Dorsolateral prefrontal cortex (tissue), 120 donors: ENCODE measurements at regions of chr4 and their contacts with region 1.

Region 1: DNA sequence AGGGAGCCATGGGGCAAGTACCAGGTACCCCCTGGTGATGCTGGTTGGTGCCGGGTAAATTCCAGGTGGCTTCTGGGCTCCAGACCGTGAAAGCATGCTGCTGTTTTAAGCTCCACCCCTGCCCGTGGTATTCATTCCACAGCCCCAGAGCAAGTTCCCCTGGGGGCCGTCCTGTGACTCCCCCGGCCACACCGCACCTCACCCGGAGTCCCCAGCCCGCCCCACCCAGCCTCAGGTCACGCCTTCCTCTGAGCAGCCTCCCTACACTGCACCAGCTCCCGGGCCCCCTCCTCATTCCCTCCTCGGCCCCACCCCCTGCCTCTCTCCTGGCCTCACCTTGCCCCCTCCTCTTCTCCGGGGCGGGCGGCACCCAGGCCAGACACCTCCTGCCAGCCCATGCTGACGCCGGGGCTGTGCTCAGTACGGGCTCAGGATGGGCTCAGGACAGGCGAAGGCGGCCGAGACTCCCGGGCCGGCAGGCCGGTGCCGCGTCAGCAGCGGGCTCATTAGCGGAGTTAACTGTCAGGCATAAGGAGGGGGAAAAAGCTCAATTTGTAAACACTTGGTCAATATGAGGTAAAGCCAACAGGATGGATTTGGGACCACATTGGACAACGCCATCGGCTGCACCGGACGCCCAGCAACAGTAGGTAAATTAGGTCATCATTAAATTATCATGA is 127.4 kb downstream of the FAM53A start:
- DNase-seq: peak in 1 of 10 donors; percentile 36
- H3K4me3 ChIP-seq: no peak overlapping the region
- H3K27ac ChIP-seq: no peak overlapping the region
- H3K27me3 ChIP-seq: peaks cover 0 to 69% (median 36%) of the 10 kb centered on the region in 45 donors
- CTCF ChIP-seq: no peak

Region 2: DNA sequence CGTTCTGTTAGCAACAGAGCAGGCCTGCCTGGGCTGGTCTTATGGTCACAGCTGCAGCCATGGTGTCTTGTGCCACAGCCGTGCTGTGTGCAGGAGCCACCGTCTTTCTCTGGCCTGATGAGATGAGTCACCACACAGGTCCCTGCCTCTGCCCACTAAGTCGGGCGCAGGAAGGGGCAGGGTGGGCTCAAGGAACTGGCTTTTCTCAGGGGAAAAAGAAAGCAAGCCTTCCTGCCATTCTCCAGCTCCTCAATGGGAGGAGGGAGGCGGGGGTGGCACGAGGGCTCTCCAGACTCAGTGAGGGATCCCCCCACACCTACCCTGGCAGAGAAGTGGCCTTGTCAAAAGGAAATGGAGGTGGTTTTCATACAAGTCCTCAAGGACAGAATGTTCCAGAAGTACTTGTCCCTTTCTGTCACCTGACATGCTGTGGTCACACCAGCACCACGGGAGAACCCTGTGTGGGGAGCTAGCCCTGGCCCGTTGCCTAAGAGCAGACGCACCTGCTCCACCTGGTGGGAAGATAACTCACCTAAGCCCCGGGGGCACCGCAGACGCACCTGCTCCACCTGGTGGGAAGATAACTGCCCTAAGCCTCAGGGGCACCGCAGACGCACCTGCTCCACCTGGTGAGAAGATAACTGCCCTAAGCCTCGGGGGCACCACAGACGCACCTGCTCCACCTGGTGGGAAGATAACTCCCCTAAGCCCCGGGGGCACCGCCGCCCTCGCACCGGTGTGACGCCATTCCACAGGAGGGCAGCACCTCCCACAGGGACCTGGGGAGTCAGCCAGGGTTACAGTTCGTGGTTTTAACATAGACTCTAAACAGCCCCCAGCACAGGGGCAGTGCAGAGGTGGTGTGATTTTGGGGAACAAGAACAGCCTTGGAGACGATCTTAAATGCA is 191.2 kb before region 1 on chr4:
- intact Hi-C with region 1: loop called in 1 of 2 experiments (anchors 10 kb)
- DNase-seq: peak in 1 of 10 donors; percentile 31
- H3K4me3 ChIP-seq: no peak overlapping the region
- H3K27ac ChIP-seq: no peak overlapping the region
- H3K27me3 ChIP-seq: no peaks in the 10 kb centered on the region
- CTCF ChIP-seq: no peak

Region 3: DNA sequence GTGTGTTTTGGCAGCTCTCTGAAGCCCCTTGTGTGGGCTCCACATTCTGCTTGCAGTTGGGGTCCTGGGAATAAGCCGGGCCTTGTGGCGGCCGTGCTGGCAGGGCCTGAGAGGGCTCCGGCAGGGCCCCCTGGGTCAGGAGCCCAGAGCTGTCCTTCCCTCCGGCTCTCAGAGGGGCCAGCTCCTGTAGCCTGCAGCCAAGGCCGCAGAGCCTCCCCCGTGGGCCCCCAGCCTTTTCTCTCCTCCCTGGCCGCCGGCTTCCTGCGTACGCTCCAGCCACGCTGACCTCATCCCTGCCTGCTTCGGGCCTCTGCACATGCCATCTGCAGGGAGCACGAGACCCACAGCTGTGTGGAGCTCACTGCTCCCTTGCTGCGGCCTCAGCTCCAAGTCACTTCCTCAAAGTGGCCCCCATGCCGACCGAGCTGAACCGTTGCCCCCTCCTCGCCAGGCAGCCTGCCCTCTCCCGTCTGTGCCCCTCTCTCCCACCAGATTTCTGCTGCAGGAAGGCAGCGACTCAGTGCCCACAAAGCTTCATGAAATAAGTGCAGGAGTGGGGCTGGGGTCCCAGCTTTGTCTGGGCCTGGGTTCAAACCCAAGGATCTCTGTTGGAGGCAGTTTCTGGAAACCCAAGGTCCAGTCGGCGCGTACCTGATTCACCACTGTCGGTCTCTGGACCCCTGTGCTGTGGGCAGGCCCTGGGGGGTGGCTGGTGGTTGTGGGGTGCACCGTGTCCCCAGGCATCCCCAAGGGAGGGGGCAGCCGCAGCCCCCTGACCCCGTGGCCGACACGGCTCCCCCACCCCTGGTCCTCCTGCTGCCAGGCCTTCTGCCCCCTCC is 93.4 kb before region 1 on chr4:
- intact Hi-C with region 1: no loop called
- DNase-seq: peak in 2 of 10 donors; percentile 29 to 38
- H3K4me3 ChIP-seq: no peak overlapping the region
- H3K27ac ChIP-seq: no peak overlapping the region
- H3K27me3 ChIP-seq: peaks cover 0 to 69% (median 23%) of the 10 kb centered on the region in 45 donors
- CTCF ChIP-seq: no peak